ENCODE measurements at regions of chr6 and their contacts with region 1.

Region 1: DNA sequence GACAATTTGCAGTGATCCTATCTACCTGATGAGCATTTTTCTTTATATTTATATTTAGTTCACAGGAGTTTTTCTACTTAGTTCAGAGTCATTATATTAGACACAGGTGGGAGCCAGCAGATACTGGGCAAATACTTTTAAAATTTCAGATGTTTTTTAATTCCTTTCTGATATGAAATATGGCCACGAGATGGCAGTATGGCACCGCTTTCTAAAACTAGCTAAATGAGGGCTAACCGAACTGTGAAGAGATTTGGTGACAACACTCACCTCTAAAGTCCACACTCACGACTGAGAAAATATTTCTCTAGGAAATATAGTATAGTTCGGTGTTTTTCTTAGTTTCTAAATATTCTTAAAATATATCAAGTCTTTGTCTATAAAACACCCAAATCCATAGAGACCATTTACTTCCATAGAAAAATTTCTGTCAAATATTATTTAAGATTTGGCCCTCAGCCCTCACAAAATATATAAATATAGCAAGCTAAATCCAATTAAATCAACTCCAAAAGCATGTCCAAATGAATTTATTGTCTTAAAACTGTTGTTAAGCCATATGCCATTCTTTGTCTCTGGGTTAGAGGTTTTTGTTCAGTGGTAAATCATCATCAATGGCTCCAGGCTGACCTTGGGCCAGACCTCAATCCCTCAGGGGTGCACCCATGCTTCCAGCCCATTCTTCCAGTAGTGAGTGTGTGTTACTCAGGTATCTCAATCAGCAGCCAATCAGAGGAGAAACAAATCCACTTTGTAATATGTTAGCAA is 63.6 kb downstream of the HUS1B start:
- DNase-seq: no peak
- ATAC-seq: peak; percentile 59
- H3K4me3 ChIP-seq: no peak overlapping the region
- H3K27ac ChIP-seq: no peak overlapping the region
- H3K4me1 ChIP-seq: no peaks in the 10 kb centered on the region
- H3K27me3 ChIP-seq: no peaks in the 10 kb centered on the region

Region 2: DNA sequence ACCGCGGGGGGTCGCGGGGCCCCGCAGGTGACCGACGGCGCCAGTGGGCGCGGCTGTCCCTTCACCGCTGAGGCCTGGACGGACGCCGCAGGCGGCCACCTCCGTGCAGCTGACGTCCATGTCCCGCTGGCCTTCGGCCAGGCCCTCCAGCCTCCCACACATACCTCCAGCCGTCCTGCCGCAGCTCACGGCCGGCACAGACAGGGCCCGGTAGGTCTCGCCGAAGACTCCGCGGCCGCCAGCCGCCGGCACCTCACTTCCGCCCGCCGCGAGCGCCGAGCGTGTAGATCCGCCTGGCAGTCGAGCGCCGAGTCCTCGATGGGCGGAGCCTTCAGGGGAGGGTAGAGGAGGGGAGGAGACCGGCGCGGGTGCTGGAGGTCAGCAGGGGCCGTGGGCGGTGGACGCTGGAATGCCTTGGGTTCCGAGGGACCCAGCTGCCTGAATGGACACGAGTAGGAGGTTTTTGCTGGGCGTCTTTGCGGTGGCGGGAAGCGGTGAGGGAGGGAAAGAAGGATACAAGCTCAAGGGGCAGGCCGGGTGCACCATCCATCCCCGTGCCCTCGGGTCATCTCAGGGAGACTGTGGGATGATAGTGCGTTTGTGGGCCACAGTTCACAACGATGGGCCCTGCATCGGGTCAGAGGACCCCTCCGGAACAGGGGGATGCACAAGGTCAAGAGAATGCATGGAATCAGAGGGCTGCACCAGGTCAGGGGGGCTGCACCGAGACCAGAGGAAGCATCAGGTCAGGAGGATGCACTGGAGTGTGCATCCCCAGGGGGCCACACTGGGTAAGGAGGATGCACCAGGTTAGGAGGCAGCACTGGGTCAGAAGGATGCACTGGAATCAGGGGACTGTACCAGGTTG is 99.8 kb after region 1 on chr6 and contains the start of gene EXOC2:
- intact Hi-C with region 1: loop called in 1 of 2 experiments (anchors 10 kb)
- DNase-seq: peak; percentile 92 to 96
- ATAC-seq: peak; percentile 97
- H3K4me3 ChIP-seq: peak within 1 kb of the TSS; percentile 63 to 91
- H3K27ac ChIP-seq: peak within 1 kb of the TSS in 1 of 2 donors; percentile 28
- H3K4me1 ChIP-seq: no peaks in the 10 kb centered on the region
- H3K27me3 ChIP-seq: no peaks in the 10 kb centered on the region
- total RNA-seq, gene EXOC2: 18.0 to 22.8 TPM

Region 3: GRCh38 chr6:722077-722524 is 128.8 kb after region 1 on chr6:
- intact Hi-C with region 1: loop called in 1 of 2 experiments (anchors 10 kb)
- DNase-seq: peak; percentile 81 to 88
- ATAC-seq: peak; percentile 78
- H3K4me3 ChIP-seq: no peak overlapping the region
- H3K27ac ChIP-seq: no peak overlapping the region
- H3K4me1 ChIP-seq: no peaks in the 10 kb centered on the region
- H3K27me3 ChIP-seq: no peaks in the 10 kb centered on the region

Region 4: GRCh38 chr6:797479-798077 is 204.3 kb after region 1 on chr6:
- intact Hi-C with region 1: loop called in 1 of 2 experiments (anchors 10 kb)
- DNase-seq: no peak
- ATAC-seq: no peak
- H3K4me3 ChIP-seq: no peak overlapping the region
- H3K27ac ChIP-seq: no peak overlapping the region
- H3K4me1 ChIP-seq: no peaks in the 10 kb centered on the region
- H3K27me3 ChIP-seq: peaks cover 0 to 2% of the 10 kb centered on the region in 2 donors

Region 5: DNA sequence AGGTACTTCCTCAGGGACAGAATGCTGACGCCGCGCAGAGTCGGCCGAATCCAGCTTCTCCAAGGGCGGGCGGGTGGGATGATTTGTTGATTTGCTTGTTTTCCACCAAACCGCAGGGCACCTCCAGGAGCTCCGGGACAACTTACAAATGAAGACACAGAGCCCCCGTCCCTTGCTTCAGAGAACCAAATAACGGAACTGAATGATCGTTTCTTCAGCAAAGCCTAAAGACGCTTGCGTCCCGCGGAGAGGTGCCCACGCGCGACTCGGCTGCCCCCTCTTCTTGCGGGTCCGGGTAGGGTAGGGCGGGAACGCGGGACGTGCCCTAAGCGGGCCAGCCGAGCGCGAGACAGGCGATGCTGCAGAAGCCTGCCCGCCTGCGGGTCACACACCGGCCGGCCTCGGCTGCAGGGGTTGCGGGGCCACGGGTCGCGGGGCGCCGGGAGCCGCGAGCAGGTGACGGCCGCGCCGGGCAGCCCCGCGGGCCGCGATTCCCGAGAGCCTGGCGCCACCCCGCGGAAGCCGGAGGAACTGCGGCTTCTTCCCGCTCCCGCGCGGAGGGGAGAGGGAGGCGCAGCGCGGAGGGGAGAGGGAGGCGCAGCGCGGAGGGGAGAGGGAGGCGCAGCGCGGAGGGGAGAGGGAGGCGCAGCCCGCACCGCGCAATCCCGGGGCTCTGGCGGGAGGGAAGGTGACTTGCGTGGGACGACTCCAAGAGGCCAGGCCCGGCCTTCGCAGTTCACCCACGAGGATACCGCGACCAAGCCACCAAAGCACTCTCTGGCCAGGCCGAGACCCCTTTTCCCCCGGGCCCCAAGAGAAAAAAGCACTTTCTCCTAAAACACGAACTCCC is 788.4 kb after region 1 on chr6:
- intact Hi-C with region 1: loop called (anchors 5 kb)
- DNase-seq: peak in 1 of 2 donors; percentile 84
- ATAC-seq: peak; percentile 83
- H3K4me3 ChIP-seq: no peak overlapping the region
- H3K27ac ChIP-seq: no peak overlapping the region
- H3K4me1 ChIP-seq: no peaks in the 10 kb centered on the region
- H3K27me3 ChIP-seq: no peaks in the 10 kb centered on the region

Region 6: GRCh38 chr6:1396952-1397868 is 803.9 kb after region 1 on chr6:
- intact Hi-C with region 1: loop called in 1 of 2 experiments (anchors 5 kb)
- DNase-seq: peak in 1 of 2 donors; percentile 88
- ATAC-seq: no peak
- H3K4me3 ChIP-seq: no peak overlapping the region
- H3K27ac ChIP-seq: no peak overlapping the region
- H3K4me1 ChIP-seq: no peaks in the 10 kb centered on the region
- H3K27me3 ChIP-seq: peaks cover 0 to 2% of the 10 kb centered on the region in 2 donors

Region 7: GRCh38 chr6:1436334-1437306 is 843.3 kb after region 1 on chr6:
- intact Hi-C with region 1: loop called in 1 of 2 experiments (anchors 5 kb)
- DNase-seq: no peak
- ATAC-seq: peak; percentile 76
- H3K4me3 ChIP-seq: no peak overlapping the region
- H3K27ac ChIP-seq: no peak overlapping the region
- H3K4me1 ChIP-seq: no peaks in the 10 kb centered on the region
- H3K27me3 ChIP-seq: no peaks in the 10 kb centered on the region

Measured in aorta (tissue), 5 donors.